Natural killer cell (primary cell): ENCODE measurements at regions of chr2 and their contacts with region 1.

Region 1: GRCh38 chr2:219206442-219207253 is at the start of gene ZFAND2B:
- DNase-seq: peak; percentile 96 to 98
- ATAC-seq: peak; percentile 92 to 98 (median 92)
- H3K4me3 ChIP-seq: peak within 1 kb of the TSS; percentile 64
- H3K4me3 Mint-ChIP-seq: peak within 1 kb of the TSS; percentile 90
- H3K27ac ChIP-seq: peak within 1 kb of the TSS; percentile 92
- H3K27ac Mint-ChIP-seq: peak within 1 kb of the TSS; percentile 92 to 98
- H3K4me1 ChIP-seq: peaks cover 52% of the 10 kb centered on the region
- H3K4me1 Mint-ChIP-seq: peaks cover 24 to 33% of the 10 kb centered on the region in 2 donors
- H3K27me3 ChIP-seq: no peaks in the 10 kb centered on the region
- H3K27me3 Mint-ChIP-seq: no peaks in the 10 kb centered on the region
- CTCF ChIP-seq: no peak
- total RNA-seq, gene ZFAND2B: 67.6 to 84.0 (median 83.4) TPM

Region 2: GRCh38 chr2:219057709-219058540 is 148.7 kb before region 1 on chr2:
- intact Hi-C with region 1: loop called (anchors 5 kb)
- DNase-seq: peak; percentile 74 to 87
- ATAC-seq: peak; percentile 90 to 98 (median 95)
- H3K4me3 ChIP-seq: no peak overlapping the region
- H3K4me3 Mint-ChIP-seq: peak overlapping the region; percentile 55
- H3K27ac ChIP-seq: no peak overlapping the region
- H3K27ac Mint-ChIP-seq: no peak overlapping the region
- H3K4me1 ChIP-seq: peaks cover 32% of the 10 kb centered on the region
- H3K4me1 Mint-ChIP-seq: peaks cover 0 to 22% of the 10 kb centered on the region in 2 donors
- H3K27me3 ChIP-seq: peaks cover 55% of the 10 kb centered on the region
- H3K27me3 Mint-ChIP-seq: peaks cover 48 to 53% of the 10 kb centered on the region in 2 donors
- CTCF ChIP-seq: peak; percentile 81

Region 3: GRCh38 chr2:219160186-219161017 is 46.2 kb before region 1 on chr2 and contains the start of gene NHEJ1:
- intact Hi-C with region 1: loop called (anchors 1 kb)
- DNase-seq: peak; percentile 94 to 96
- ATAC-seq: peak; percentile 86 to 98 (median 90)
- H3K4me3 ChIP-seq: peak within 1 kb of the TSS; percentile 76
- H3K4me3 Mint-ChIP-seq: peak within 1 kb of the TSS; percentile 95
- H3K27ac ChIP-seq: peak within 1 kb of the TSS; percentile 80
- H3K27ac Mint-ChIP-seq: peak within 1 kb of the TSS; percentile 92 to 94
- H3K4me1 ChIP-seq: peaks cover 13% of the 10 kb centered on the region
- H3K4me1 Mint-ChIP-seq: peaks cover 16 to 31% of the 10 kb centered on the region in 2 donors
- H3K27me3 ChIP-seq: no peaks in the 10 kb centered on the region
- H3K27me3 Mint-ChIP-seq: no peaks in the 10 kb centered on the region
- CTCF ChIP-seq: peak; percentile 99
- total RNA-seq, gene NHEJ1: 9.9 to 12.7 (median 11.0) TPM

Region 4: GRCh38 chr2:219171231-219171651 is 35.4 kb before region 1 on chr2:
- intact Hi-C with region 1: loop called (anchors 1 kb)
- DNase-seq: peak in 1 of 2 donors; percentile 71
- ATAC-seq: peak in 2 of 3 donors; percentile 64 to 74
- H3K4me3 ChIP-seq: no peak overlapping the region
- H3K4me3 Mint-ChIP-seq: no peak overlapping the region
- H3K27ac ChIP-seq: peak overlapping the region; percentile 11
- H3K27ac Mint-ChIP-seq: peak overlapping the region; percentile 51 to 63
- H3K4me1 ChIP-seq: peaks cover 18% of the 10 kb centered on the region
- H3K4me1 Mint-ChIP-seq: peaks cover 24 to 37% of the 10 kb centered on the region in 2 donors
- H3K27me3 ChIP-seq: no peaks in the 10 kb centered on the region
- H3K27me3 Mint-ChIP-seq: no peaks in the 10 kb centered on the region
- CTCF ChIP-seq: peak; percentile 74

Region 5: GRCh38 chr2:219177552-219178376 is 28.9 kb before region 1 on chr2 and contains the start of gene RETREG2:
- intact Hi-C with region 1: loop called (anchors 1 kb)
- DNase-seq: peak; percentile 79 to 96
- ATAC-seq: peak; percentile 57 to 71 (median 63)
- H3K4me3 ChIP-seq: peak within 1 kb of the TSS; percentile 61
- H3K4me3 Mint-ChIP-seq: peak within 1 kb of the TSS; percentile 97
- H3K27ac ChIP-seq: peak within 1 kb of the TSS; percentile 98
- H3K27ac Mint-ChIP-seq: peak within 1 kb of the TSS; percentile 99 to 100
- H3K4me1 ChIP-seq: peaks cover 43% of the 10 kb centered on the region
- H3K4me1 Mint-ChIP-seq: peaks cover 47 to 67% of the 10 kb centered on the region in 2 donors
- H3K27me3 ChIP-seq: no peaks in the 10 kb centered on the region
- H3K27me3 Mint-ChIP-seq: no peaks in the 10 kb centered on the region
- CTCF ChIP-seq: peak; percentile 38
- total RNA-seq, gene RETREG2: 77.0 to 81.9 (median 79.0) TPM

Region 6: DNA sequence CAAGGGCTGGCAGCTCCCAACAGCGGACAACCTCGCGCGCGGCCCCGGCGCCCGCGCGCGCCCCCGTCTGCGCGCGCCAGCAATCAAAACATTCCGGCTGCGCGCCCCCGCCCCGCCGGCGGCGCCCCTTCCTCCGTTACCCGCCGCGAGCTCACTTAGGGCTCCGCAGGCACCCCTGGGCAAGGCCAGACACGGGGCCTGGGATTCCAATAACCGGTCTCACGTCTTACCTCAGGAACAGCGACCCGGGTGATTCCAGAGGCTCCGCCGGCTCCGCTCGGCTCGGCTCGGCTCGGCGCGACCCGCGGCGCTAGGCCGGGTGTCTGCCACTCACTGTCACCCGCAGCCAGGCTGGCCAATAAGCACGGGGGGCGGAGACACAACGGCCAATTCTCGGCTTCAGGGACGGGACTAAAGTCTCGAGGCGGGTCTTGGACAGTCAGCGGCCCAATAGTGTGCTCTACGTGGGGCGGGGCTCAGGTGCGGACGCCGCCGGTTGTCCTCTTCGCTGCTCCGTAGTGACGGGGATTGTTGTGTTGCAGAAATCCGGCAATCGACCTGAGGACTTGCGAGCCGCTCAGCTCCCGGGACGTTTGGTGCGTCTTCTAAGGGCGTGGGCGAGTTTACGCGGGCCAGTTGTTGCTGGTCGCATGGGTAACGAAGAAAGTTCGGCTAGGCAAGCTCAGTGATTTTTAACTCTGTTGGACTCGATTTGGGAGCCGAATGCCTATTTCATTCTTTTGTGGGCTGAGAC is 22.8 kb after region 1 on chr2 and contains the starts of genes ANKZF1 and ATG9A:
- intact Hi-C with region 1: loop called (anchors 1 kb)
- DNase-seq: peak; percentile 96 to 99
- ATAC-seq: peak; percentile 96 to 99 (median 97)
- H3K4me3 ChIP-seq: peak within 1 kb of the TSS; percentile 88
- H3K4me3 Mint-ChIP-seq: peak within 1 kb of the TSS; percentile 100
- H3K27ac ChIP-seq: peak within 1 kb of the TSS; percentile 88
- H3K27ac Mint-ChIP-seq: peak within 1 kb of the TSS; percentile 99
- H3K4me1 ChIP-seq: peaks cover 34% of the 10 kb centered on the region
- H3K4me1 Mint-ChIP-seq: peaks cover 31 to 54% of the 10 kb centered on the region in 2 donors
- H3K27me3 ChIP-seq: no peaks in the 10 kb centered on the region
- H3K27me3 Mint-ChIP-seq: no peaks in the 10 kb centered on the region
- CTCF ChIP-seq: no peak
- total RNA-seq, gene ANKZF1: 100 to 148 (median 117) TPM
- total RNA-seq, gene ATG9A: 98.1 to 110 (median 108) TPM

Region 7: DNA sequence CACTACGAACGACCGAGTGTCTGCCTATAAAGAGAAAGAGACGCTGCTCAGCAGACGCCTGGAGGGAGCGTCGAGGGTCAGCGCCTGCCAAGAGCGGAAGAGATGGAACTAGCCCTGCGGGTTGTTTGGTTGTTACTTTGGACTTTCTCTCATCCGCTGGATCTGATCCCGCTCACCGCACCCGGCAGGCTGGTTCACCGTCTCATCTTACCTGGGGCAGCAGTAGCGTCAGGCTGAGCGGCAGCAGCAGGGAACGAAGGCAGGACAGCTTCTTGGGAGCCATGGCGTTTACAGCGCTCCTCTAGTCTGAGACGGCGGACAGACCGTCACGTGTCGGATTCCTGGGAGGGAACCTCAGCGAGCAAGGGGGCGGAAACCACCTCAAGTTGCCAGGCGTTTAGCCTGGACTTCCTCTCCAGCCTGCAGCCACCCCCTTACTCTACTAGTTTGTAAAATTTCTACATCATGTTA is 36.7 kb after region 1 on chr2:
- intact Hi-C with region 1: no loop called
- DNase-seq: no peak
- ATAC-seq: no peak
- H3K4me3 ChIP-seq: no peak overlapping the region
- H3K4me3 Mint-ChIP-seq: peak overlapping the region; percentile 35
- H3K27ac ChIP-seq: no peak overlapping the region
- H3K27ac Mint-ChIP-seq: peak overlapping the region; percentile 46 to 98
- H3K4me1 ChIP-seq: peaks cover 33% of the 10 kb centered on the region
- H3K4me1 Mint-ChIP-seq: peaks cover 25 to 40% of the 10 kb centered on the region in 2 donors
- H3K27me3 ChIP-seq: no peaks in the 10 kb centered on the region
- H3K27me3 Mint-ChIP-seq: no peaks in the 10 kb centered on the region
- CTCF ChIP-seq: no peak

Region 8: DNA sequence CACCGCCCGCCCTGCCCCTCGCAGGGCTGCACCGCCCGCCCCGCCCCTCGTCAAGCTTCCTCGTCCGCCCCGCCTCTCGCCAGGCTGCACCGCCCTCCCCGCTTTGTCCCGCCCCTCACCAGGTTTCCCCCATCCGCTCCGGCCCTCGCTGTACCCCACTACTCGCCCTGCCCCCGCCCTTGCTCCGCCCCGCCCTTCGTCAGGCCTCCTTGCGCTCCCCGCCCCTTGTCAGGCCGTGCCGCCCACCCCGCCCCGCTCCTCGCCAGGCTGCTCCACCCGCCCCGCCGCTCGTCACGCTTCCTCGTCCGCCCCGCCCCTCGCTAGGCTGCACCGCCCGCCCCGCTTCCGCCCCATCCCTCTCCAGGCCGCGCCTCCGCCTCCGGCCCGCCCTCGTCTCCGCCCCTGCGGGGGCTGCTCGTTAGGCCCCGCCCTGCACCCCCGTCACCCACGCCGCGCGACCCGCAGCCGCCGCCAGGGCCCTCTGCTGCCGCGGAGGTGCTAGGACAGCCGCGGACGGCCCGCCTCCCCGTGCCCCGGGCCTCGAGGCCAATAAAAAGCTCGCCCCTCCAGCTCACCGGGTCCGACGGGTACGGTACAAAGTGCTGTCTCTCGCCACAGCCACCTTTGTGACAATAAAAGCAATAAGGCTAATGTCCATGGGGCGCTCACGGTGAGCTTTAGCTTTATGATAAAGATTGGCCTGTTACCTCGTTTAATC is 181.6 kb after region 1 on chr2:
- intact Hi-C with region 1: loop called (anchors 1 kb)
- DNase-seq: peak; percentile 98 to 99
- ATAC-seq: peak; percentile 79 to 90 (median 80)
- H3K4me3 ChIP-seq: peak overlapping the region; percentile 12
- H3K4me3 Mint-ChIP-seq: peak overlapping the region; percentile 63
- H3K27ac ChIP-seq: peak overlapping the region; percentile 71
- H3K27ac Mint-ChIP-seq: peak overlapping the region; percentile 92 to 98
- H3K4me1 ChIP-seq: peaks cover 18% of the 10 kb centered on the region
- H3K4me1 Mint-ChIP-seq: peaks cover 4 to 21% of the 10 kb centered on the region in 2 donors
- H3K27me3 ChIP-seq: no peaks in the 10 kb centered on the region
- H3K27me3 Mint-ChIP-seq: peaks cover 0 to 4% of the 10 kb centered on the region in 2 donors
- CTCF ChIP-seq: peak; percentile 61